Activated CD8-positive, alpha-beta T cell treated with anti-CD3 and anti-CD28 coated beads, Interleukin-2, amount 10 ng/mL, durations not matched to agents 7 days and 5 days (primary cell): ENCODE measurements at regions of chr12 and their contacts with region 1.

Region 1: GRCh38 chr12:53508534-53509199 is 1.4 kb upstream of the NPFF start:
- DNase-seq: peak; percentile 91
- ATAC-seq: peak; percentile 97
- H3K4me3 Mint-ChIP-seq: no peak overlapping the region
- H3K27ac Mint-ChIP-seq: peak overlapping the region; percentile 81
- H3K4me1 Mint-ChIP-seq: peaks cover 18% of the 10 kb centered on the region
- H3K27me3 Mint-ChIP-seq: no peaks in the 10 kb centered on the region

Region 2: GRCh38 chr12:53344824-53345485 is 163.7 kb before region 1 on chr12:
- CTCF ChIA-PET with region 1: interaction called, 12 read pairs
- POLR2A ChIA-PET with region 1: no interaction called
- DNase-seq: peak; percentile 78
- ATAC-seq: peak; percentile 85
- H3K4me3 Mint-ChIP-seq: peak overlapping the region; percentile 92
- H3K27ac Mint-ChIP-seq: peak overlapping the region; percentile 91
- H3K4me1 Mint-ChIP-seq: peaks cover 17% of the 10 kb centered on the region
- H3K27me3 Mint-ChIP-seq: peaks cover 9% of the 10 kb centered on the region

Region 3: GRCh38 chr12:53476769-53477209 is 31.9 kb before region 1 on chr12:
- CTCF ChIA-PET with region 1: interaction called, 78 read pairs
- POLR2A ChIA-PET with region 1: no interaction called
- DNase-seq: no peak
- ATAC-seq: no peak
- H3K4me3 Mint-ChIP-seq: no peak overlapping the region
- H3K27ac Mint-ChIP-seq: peak overlapping the region; percentile 43
- H3K4me1 Mint-ChIP-seq: peaks cover 40% of the 10 kb centered on the region
- H3K27me3 Mint-ChIP-seq: no peaks in the 10 kb centered on the region

Region 4: DNA sequence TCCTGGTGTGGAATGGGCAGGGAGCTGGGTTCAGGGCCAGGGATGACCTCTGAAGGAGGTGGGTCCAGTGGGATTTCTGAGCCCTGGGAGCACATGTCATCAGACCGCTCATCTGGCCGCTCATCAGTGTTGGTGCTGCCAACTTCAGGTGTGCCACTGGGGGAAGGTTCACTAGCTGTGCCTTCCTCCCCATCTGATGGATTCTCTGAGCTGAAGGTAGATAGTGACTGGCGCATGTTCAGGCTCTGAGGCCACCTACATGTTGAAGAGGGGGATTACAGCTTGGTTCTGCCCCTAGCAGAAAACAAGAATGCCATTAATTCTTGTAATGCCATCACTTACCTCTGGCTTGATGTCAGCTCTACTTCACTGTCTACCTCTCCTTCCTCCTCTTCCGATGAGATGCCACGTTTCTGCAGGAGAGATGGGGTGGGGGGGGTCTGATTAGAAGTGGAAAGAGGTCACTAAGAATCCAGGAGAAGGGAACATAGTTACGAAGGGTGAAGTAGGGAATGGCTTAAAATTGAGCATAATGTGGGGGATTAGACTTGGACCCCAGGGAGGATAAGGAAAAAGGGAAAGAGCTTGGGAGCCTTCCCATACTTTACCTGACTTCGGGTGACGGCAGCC is 26.6 kb before region 1 on chr12:
- CTCF ChIA-PET with region 1: interaction called, 78 read pairs
- POLR2A ChIA-PET with region 1: no interaction called
- DNase-seq: no peak
- ATAC-seq: no peak
- H3K4me3 Mint-ChIP-seq: no peak overlapping the region
- H3K27ac Mint-ChIP-seq: no peak overlapping the region
- H3K4me1 Mint-ChIP-seq: peaks cover 5% of the 10 kb centered on the region
- H3K27me3 Mint-ChIP-seq: no peaks in the 10 kb centered on the region

Region 5: DNA sequence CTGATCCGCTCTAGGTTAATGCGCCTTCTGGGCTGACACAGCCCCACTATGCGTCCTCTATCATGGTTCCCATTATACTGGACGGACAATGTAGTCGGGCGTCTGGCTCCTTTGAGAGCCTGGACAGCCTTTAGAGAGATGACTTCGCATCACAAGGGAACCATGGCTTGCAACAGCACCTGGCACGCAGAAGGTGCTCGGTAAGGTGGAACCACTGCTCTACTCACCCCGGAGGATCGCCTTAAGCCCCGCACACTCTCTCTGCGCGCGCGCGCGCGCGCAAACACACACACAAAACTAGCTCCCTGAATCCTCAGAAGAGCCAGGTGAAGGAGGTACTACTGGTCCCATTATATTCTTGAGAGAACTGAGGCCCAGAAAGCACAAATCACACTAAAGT is 16.5 kb before region 1 on chr12:
- CTCF ChIA-PET with region 1: interaction called, 13 read pairs
- POLR2A ChIA-PET with region 1: no interaction called
- DNase-seq: no peak
- ATAC-seq: no peak
- H3K4me3 Mint-ChIP-seq: peak overlapping the region; percentile 82
- H3K27ac Mint-ChIP-seq: peak overlapping the region; percentile 69
- H3K4me1 Mint-ChIP-seq: peaks cover 30% of the 10 kb centered on the region
- H3K27me3 Mint-ChIP-seq: no peaks in the 10 kb centered on the region

Region 6: DNA sequence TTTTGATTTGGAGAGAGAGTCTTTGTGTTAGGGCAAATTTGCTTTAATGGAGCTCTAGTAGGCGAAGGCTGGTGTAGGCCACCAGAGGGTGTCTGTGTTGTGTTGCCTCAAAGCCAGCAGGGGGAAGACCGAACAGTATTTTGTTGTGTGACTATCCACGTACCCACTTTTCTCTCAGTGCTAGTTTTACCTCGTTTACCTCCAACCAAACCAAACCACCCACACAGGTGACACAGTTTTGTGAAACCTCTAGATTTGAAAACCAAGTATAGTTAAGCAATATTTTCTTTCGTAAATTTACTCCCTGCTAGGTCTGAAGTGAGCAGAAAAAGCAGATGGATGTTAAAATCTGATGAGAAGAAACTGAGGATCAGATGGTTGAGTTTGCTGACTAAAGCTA is 34.9 kb after region 1 on chr12:
- CTCF ChIA-PET with region 1: interaction called, 11 read pairs
- POLR2A ChIA-PET with region 1: no interaction called
- DNase-seq: peak; percentile 65
- ATAC-seq: peak; percentile 92
- H3K4me3 Mint-ChIP-seq: no peak overlapping the region
- H3K27ac Mint-ChIP-seq: peak overlapping the region; percentile 59
- H3K4me1 Mint-ChIP-seq: peaks cover 10% of the 10 kb centered on the region
- H3K27me3 Mint-ChIP-seq: no peaks in the 10 kb centered on the region